RWPE1 (cell line): ENCODE measurements at regions of chr5 and their contacts with region 1.

Region 1: DNA sequence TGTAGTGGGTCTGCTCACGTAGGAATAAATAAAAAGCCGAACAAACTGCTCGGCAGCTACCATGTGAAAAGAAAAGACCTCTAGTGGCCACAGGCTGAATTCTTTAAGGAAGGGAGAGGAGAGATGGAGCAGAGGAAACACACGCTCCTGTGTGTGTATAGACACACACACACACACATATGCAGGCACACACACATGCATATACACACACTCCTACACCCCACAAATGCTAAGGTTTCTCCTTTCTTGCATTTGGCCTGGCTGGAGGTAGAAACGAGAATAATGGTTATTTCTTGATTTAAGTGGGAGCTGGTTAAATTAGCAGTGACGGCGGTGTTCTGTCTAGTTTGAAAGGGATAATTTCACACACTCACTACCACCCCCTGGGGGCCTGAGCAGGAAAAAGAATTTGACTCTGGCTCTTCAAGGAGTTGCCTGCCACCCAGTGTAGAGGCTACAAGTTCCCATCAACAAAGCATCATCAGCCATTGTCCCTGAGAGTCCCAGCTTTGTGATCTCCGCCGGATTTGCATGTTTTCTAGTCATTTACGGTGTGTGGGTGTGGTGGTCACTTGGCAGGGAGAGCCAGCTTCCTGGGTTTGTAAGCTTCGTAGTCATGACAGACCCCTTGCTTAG is at the start of gene INSYN2B:
- DNase-seq: peak; percentile 90
- H3K27ac ChIP-seq: no peak within 1 kb of the TSS
- CTCF ChIP-seq: peak; percentile 92

Region 2: DNA sequence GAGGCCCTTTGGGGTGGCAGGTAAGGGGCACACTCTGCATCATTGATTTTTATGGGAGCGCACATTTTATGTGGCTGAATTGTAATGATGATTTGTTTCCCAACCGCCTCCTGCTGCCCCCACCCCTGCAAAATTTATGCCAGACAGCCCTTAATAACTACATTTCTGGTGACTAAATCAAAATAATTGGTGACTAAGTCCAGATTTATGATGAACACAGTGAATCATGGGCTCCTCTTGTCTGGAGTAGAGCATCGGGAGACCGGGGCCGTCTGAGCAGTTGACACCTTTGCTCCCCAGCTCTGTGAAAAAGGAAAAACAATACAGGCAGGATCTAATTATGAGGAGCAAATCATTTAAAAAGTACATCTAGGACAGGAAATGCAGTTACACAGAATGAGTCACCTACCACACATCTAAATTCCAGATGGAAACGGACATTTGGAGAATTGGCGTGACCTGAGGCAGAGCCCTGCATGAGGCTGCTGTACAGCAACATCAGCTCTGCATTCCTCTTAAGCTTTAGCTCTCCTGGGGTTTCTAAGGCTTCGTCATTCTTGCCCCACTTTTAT is 284.5 kb before region 1 on chr5:
- CTCF ChIA-PET with region 1: interaction called, 69 read pairs
- POLR2A ChIA-PET with region 1: no interaction called
- DNase-seq: peak; percentile 99
- H3K27ac ChIP-seq: peak overlapping the region; percentile 85
- CTCF ChIP-seq: no peak

Region 3: GRCh38 chr5:169701910-169702451 is 278.6 kb before region 1 on chr5:
- CTCF ChIA-PET with region 1: interaction called, 69 read pairs
- POLR2A ChIA-PET with region 1: no interaction called
- DNase-seq: peak; percentile 54
- H3K27ac ChIP-seq: no peak overlapping the region
- CTCF ChIP-seq: peak; percentile 59; the same call in 1 of the 2 replicates

Region 4: DNA sequence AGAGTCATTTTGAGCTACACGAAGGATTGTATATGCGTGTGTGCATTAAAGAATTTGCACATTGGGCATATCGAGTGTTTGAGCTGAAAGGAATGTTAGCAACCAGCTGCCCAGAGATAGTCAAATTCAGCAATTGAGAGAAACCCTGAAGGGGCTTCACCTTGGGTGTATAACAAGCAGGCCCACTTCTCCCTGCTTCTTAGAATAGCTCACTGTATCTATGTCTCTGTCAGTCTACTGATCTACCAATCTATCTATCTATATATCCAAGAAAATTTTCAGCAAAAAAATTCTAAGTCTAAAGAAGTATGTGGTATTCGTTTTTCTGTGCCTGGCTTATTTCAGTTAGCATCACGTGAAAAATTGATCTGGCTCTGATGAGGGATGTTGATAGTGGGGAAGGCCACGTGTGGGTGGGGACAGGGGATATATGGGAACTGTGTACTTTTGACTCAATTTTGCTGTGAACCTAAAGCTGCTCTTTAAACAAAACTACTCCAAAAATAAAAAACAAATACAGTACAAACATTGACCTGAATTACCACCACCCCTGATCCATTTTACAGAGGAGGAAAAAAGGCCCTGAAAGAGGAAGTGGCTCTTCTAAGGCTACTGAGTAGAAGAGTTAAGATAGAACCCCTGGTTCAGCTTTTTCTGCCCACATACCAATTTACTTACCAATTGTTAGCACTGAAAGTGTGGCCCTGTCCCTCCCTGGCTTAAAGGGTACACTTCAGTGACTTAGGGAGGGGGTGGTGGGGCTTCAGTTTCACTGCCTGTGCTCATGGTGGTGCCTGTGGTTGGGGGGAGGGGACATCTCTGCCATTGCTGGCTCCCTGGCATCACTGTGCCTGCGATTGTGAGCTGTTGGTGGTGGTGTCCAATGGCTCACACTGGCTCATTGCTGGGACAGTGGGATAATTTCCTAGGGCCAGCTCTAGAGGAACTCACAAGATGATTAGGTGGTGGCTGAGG is 201.6 kb before region 1 on chr5:
- CTCF ChIA-PET with region 1: no interaction called
- POLR2A ChIA-PET with region 1: no interaction called
- DNase-seq: no peak
- H3K27ac ChIP-seq: no peak overlapping the region
- CTCF ChIP-seq: no peak

Region 5: DNA sequence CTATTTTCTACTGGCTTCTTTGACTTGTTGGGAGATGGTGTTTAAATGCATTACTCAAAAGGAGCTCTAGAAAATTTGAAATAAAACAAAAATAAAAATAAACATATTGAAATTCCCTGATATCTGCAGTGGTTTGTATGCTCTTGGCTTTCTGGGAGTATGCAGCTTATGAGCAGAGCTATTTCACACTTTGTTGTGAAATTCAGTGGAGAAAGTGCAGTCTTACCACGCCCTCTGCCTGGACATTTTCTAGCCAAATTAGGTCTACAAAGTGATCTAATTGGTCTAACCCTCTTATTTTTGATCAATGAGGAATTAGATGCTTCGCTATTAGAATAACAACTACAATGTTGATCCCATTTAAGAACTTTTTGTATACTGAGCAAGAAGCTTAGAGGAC is 67.1 kb before region 1 on chr5:
- CTCF ChIA-PET with region 1: interaction called, 11 read pairs
- POLR2A ChIA-PET with region 1: no interaction called
- DNase-seq: no peak
- H3K27ac ChIP-seq: no peak overlapping the region
- CTCF ChIP-seq: no peak

Region 6: GRCh38 chr5:169958278-169958677 is 22.3 kb before region 1 on chr5:
- CTCF ChIA-PET with region 1: interaction called, 14 read pairs
- POLR2A ChIA-PET with region 1: no interaction called
- DNase-seq: no peak
- H3K27ac ChIP-seq: no peak overlapping the region
- CTCF ChIP-seq: no peak

Region 7: DNA sequence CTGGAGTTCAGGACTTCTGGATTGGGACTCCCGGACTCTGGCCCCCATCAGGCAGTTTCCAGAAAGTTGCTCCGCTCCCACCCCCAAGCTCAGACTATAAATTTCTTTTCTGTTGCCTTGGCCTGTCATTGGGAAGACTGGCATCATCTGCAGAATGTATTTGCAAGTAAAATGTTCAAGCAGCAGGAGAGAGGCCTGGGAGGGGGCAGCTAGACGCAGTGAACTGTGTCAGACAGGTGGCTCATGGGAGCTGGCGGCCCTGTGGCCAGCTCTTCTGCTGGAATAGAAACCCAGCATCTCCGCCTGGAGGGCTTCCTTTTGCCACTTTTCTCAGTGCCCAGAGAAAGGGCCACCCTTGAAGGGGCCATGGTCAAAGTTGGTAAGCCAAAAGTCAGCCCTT is 16.3 kb before region 1 on chr5:
- CTCF ChIA-PET with region 1: interaction called, 14 read pairs
- POLR2A ChIA-PET with region 1: no interaction called
- DNase-seq: no peak
- H3K27ac ChIP-seq: no peak overlapping the region
- CTCF ChIP-seq: no peak